ENCODE measurements at regions of chr10 and their contacts with region 1.

Region 1: GRCh38 chr10:101095542-101096213 is 33.9 kb downstream of the KAZALD1 start:
- DNase-seq: peak; percentile 86
- H3K4me3 Mint-ChIP-seq: no peak overlapping the region
- H3K27ac Mint-ChIP-seq: no peak overlapping the region
- H3K4me1 Mint-ChIP-seq: no peaks in the 10 kb centered on the region
- H3K27me3 Mint-ChIP-seq: peaks cover 39% of the 10 kb centered on the region

Region 2: GRCh38 chr10:101042667-101043355 is 52.9 kb before region 1 on chr10:
- CTCF ChIA-PET with region 1: interaction called, 9 read pairs
- intact Hi-C with region 1: loop called (anchors 1 kb)
- DNase-seq: peak; percentile 97
- H3K4me3 Mint-ChIP-seq: peak overlapping the region; percentile 91
- H3K27ac Mint-ChIP-seq: peak overlapping the region; percentile 74
- H3K4me1 Mint-ChIP-seq: peaks cover 22% of the 10 kb centered on the region
- H3K27me3 Mint-ChIP-seq: peaks cover 17% of the 10 kb centered on the region

Region 3: DNA sequence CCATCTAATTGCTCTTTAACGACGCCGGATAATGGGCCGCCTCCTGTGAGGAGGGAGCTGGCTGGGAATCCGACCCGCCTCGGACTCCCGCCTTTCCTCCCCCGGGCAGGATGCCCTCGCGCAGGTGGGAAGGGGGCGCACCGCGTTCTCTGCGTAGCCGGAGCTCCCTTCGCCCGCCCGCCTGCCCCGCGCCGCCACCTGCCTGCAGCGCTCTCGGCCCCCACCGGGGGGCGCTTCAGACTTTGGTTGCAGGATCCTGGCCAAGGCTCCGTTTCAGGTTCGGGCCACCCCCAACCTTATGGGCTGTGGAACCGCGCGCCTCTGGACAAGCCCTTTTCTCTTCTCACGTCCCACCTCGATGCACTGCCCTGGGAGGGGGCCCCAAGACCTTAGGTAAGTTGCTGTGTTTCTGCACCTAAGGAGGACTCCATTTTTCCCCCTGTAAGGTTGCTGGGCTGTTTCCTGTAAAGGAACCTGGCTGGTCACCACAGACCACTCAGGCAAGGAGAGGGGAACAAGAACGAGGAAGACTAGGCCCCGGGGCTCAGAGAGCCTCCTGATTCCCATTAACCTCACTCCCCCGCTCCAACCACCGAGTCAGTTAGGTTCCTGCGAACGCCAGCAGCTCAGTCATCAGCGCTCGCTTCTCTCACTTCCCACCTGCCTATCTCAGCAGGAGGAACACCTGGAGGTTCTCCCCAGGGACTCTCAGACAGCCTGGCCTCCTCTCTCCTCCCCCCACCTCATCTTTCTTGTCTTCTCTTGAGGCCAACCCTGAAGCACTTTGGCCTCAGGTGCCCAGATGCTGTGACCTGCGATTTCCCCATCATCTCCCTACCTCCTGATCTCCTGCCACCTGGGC is 45.2 kb before region 1 on chr10:
- CTCF ChIA-PET with region 1: interaction called, 20 read pairs
- intact Hi-C with region 1: no loop called
- DNase-seq: peak; percentile 81
- H3K4me3 Mint-ChIP-seq: no peak overlapping the region
- H3K27ac Mint-ChIP-seq: no peak overlapping the region
- H3K4me1 Mint-ChIP-seq: peaks cover 9% of the 10 kb centered on the region
- H3K27me3 Mint-ChIP-seq: peaks cover 48% of the 10 kb centered on the region

Region 4: GRCh38 chr10:101060036-101060950 is 35.4 kb before region 1 on chr10:
- CTCF ChIA-PET with region 1: interaction called, 7 read pairs
- intact Hi-C with region 1: loop called (anchors 1 kb)
- DNase-seq: peak; percentile 96
- H3K4me3 Mint-ChIP-seq: peak overlapping the region; percentile 87
- H3K27ac Mint-ChIP-seq: peak overlapping the region; percentile 93
- H3K4me1 Mint-ChIP-seq: peaks cover 29% of the 10 kb centered on the region
- H3K27me3 Mint-ChIP-seq: peaks cover 24% of the 10 kb centered on the region

Region 5: GRCh38 chr10:101107771-101108170 is 12.1 kb after region 1 on chr10:
- CTCF ChIA-PET with region 1: interaction called, 24 read pairs
- intact Hi-C with region 1: no loop called
- DNase-seq: no peak
- H3K4me3 Mint-ChIP-seq: no peak overlapping the region
- H3K27ac Mint-ChIP-seq: no peak overlapping the region
- H3K4me1 Mint-ChIP-seq: no peaks in the 10 kb centered on the region
- H3K27me3 Mint-ChIP-seq: peaks cover 16% of the 10 kb centered on the region

Region 6: GRCh38 chr10:101120884-101121653 is 25.4 kb after region 1 on chr10:
- CTCF ChIA-PET with region 1: interaction called, 13 read pairs
- intact Hi-C with region 1: no loop called
- DNase-seq: peak; percentile 52
- H3K4me3 Mint-ChIP-seq: peak overlapping the region; percentile 86
- H3K27ac Mint-ChIP-seq: no peak overlapping the region
- H3K4me1 Mint-ChIP-seq: peaks cover 26% of the 10 kb centered on the region
- H3K27me3 Mint-ChIP-seq: peaks cover 41% of the 10 kb centered on the region

Region 7: GRCh38 chr10:101301249-101301711 is 205.6 kb after region 1 on chr10:
- CTCF ChIA-PET with region 1: no interaction called
- intact Hi-C with region 1: no loop called
- DNase-seq: peak; percentile 71
- H3K4me3 Mint-ChIP-seq: no peak overlapping the region
- H3K27ac Mint-ChIP-seq: no peak overlapping the region
- H3K4me1 Mint-ChIP-seq: peaks cover 1% of the 10 kb centered on the region
- H3K27me3 Mint-ChIP-seq: peaks cover 23% of the 10 kb centered on the region